ENCODE measurements at regions of chr7 and their contacts with region 1.

Region 1: DNA sequence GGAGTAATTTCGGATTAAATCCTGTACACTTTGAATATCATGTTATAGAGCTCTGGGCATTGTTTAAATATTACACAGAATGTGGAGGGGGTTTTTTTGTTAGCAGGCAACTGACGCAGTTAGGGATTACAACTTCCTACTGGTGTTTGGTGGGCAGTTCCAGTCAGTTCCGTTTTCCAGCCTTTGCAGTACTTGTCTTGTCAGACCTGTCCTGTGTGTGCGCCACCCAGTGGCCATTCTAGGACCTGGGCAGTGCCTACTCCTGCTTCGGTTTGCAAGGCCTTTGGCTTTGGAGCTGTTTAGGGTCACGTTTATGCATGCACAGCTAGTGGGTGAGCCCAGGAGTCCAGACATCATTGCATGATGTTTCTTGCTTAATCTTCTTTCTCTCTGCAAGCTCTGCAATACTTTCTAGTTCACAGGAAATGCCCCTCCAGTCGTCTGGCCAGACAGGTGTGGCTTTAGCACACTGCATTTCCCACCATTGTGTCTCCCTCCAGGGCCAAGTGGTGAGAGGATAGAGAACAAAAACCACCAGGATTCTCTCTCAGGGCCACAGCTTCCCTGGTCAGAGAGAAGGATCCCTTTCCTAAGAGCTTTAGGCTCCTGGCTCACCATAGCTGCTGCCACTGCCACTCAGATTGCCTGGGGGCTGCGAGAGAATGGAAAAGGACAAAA is 96.5 kb upstream of the TARP start:
- DNase-seq: peak; percentile 87
- ATAC-seq: peak; percentile 81
- H3K4me3 Mint-ChIP-seq: peak overlapping the region; percentile 13
- H3K27ac Mint-ChIP-seq: peak overlapping the region; percentile 70
- H3K4me1 Mint-ChIP-seq: peaks cover 54% of the 10 kb centered on the region
- H3K27me3 Mint-ChIP-seq: no peaks in the 10 kb centered on the region

Region 2: GRCh38 chr7:38171623-38172391 is 198.1 kb before region 1 on chr7:
- CTCF ChIA-PET with region 1: interaction called, 10 read pairs
- POLR2A ChIA-PET with region 1: no interaction called
- DNase-seq: no peak
- ATAC-seq: no peak
- H3K4me3 Mint-ChIP-seq: no peak overlapping the region
- H3K27ac Mint-ChIP-seq: no peak overlapping the region
- H3K4me1 Mint-ChIP-seq: peaks cover 6% of the 10 kb centered on the region
- H3K27me3 Mint-ChIP-seq: peaks cover 8% of the 10 kb centered on the region

Region 3: DNA sequence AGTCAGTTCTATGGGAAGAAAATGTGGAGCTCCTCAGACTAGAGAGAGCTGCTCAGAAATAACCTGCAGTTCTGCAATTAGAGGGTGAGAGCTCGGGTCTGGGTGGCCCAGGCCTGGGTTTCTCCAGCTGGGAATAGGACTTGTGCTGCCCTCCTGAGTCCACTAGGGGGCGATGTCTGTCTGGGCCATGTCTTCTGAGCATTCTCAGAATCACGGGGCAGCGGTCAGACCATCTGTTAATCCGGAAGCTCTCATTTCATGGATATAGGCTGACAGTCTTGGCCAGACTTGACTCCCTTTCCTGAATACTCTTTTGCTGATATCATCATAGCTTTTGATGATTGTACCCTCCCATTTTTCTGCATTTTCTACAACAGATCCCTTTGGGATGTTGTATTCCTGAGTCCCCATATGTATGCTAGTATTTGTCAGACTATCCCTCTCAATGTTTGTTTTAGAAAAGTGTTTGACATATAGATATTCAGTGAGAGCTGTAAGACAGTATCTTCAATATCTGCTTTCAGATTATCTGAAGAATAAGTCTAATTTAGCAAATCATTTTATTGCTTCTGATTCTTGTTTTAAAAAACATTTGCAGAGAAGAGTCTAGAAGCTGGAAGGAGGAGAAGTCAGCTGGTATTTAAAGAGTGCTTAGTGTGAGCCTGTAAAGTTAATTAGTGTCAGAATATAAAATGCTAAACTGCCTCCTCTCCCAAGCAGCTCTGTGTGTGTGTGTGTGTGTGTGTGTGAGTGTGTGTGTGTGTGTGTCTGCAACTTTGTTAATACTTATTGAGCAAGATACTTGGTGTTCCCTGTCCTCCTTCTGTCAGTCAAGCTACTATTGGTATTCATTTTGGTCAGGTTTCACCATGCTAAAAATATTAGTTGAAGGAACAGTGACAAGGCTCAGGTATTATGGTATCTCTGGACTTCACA is 154.0 kb before region 1 on chr7:
- CTCF ChIA-PET with region 1: interaction called, 346 read pairs
- POLR2A ChIA-PET with region 1: interaction called, 5 read pairs
- DNase-seq: peak; percentile 89
- ATAC-seq: peak; percentile 80
- H3K4me3 Mint-ChIP-seq: no peak overlapping the region
- H3K27ac Mint-ChIP-seq: peak overlapping the region; percentile 55
- H3K4me1 Mint-ChIP-seq: peaks cover 52% of the 10 kb centered on the region
- H3K27me3 Mint-ChIP-seq: no peaks in the 10 kb centered on the region

Region 4: DNA sequence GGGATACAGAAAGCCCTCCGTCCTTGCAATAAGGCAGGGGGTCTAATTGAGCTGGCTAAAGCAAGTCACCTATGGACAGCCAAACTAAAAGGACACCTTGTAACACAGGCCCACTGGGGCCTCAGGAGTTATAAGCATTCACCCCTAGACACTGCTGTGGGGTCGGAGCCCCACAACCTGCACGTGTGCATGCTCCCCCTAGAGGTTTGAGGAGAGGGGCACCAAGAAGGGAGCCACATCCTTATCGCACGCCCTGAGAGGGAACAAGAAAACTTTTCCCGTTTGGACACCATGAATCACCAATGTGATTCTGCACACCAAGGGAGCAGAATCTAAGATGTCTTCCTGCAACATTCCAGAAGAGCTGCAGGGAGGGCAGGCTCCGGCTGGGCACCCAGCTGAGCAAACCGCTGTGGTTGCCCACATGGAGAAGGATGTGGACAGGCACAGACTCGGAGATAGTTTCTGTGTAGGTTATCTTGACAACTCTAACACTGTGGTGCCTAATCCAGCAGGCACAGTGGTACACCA is 78.8 kb before region 1 on chr7:
- CTCF ChIA-PET with region 1: no interaction called
- POLR2A ChIA-PET with region 1: no interaction called
- DNase-seq: no peak
- ATAC-seq: no peak
- H3K4me3 Mint-ChIP-seq: no peak overlapping the region
- H3K27ac Mint-ChIP-seq: no peak overlapping the region
- H3K4me1 Mint-ChIP-seq: peaks cover 2% of the 10 kb centered on the region
- H3K27me3 Mint-ChIP-seq: no peaks in the 10 kb centered on the region

Region 5: DNA sequence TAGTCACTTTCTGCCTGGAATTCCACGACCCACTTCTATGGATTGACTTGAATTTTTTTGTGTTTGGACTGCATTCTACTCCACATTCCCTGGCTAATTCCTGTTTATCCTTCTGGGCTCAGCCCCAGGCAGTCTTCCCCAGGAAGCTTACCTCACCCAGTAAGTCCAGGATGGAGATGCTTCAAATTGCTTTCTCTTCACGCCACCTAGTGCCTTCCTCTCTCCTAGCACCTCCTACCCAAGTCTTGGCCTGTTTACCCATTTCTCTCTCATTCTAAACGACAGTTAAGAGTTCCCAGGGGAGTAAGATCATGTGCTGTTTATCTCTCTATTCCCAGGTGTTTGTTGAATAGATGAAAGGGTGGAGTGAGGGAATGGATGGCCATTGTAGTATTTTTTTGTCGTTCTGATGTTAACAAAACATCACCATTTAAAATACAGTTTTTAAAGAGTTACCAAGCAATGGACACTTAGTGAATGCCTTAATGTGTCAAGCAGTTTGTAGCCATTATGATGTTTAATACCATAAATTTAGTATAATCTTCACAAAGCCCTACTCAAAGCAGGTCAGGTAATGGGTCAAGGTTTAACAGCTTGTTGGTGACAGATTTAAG is 51.0 kb before region 1 on chr7:
- CTCF ChIA-PET with region 1: interaction called, 17 read pairs
- POLR2A ChIA-PET with region 1: no interaction called
- DNase-seq: no peak
- ATAC-seq: peak; percentile 56
- H3K4me3 Mint-ChIP-seq: peak overlapping the region; percentile 71
- H3K27ac Mint-ChIP-seq: peak overlapping the region; percentile 76
- H3K4me1 Mint-ChIP-seq: peaks cover 55% of the 10 kb centered on the region
- H3K27me3 Mint-ChIP-seq: no peaks in the 10 kb centered on the region

Region 6: DNA sequence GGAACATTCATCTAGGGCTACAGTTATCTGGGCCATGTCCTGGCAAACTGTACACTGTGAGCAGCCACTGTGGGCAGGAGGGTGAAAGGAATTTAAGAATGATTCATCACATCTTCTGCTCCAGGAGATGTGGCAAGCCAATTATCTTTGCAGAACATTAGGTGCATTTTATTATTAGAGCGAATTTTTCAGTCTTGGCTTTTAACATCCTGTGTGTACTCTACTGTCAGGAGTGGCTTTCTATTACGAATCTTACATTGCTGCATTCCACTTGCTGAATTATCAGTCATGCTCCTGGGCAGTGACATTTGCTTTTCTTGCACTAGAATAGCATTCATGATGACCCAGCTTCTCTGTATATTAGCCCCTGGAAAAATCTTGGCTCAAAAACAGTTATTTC is 12.7 kb after region 1 on chr7:
- CTCF ChIA-PET with region 1: interaction called, 70 read pairs
- POLR2A ChIA-PET with region 1: interaction called, 3 read pairs
- DNase-seq: no peak
- ATAC-seq: no peak
- H3K4me3 Mint-ChIP-seq: no peak overlapping the region
- H3K27ac Mint-ChIP-seq: no peak overlapping the region
- H3K4me1 Mint-ChIP-seq: no peaks in the 10 kb centered on the region
- H3K27me3 Mint-ChIP-seq: no peaks in the 10 kb centered on the region

Region 7: DNA sequence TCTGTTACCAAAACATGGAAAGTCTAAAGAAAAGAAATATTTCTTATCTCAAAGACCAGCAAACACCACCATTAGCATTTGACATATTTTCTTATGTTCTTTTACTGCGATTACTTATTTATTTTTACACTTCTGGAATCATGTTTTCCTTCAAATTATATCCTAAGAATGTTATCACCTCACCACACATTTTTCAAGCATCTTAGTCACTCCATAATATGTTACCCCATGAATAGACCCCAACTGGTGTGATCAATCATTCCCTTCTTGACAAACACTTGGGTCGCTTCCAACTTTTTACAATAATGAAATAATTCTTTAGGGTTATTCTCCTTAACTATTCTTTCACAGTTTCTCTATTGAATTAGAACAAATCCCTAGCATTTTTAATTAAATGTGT is 193.8 kb after region 1 on chr7:
- CTCF ChIA-PET with region 1: no interaction called
- POLR2A ChIA-PET with region 1: no interaction called
- DNase-seq: no peak
- ATAC-seq: no peak
- H3K4me3 Mint-ChIP-seq: no peak overlapping the region
- H3K27ac Mint-ChIP-seq: no peak overlapping the region
- H3K4me1 Mint-ChIP-seq: no peaks in the 10 kb centered on the region
- H3K27me3 Mint-ChIP-seq: peaks cover 4% of the 10 kb centered on the region